ENCODE measurements at regions of chr2 and their contacts with region 1.

Region 1: DNA sequence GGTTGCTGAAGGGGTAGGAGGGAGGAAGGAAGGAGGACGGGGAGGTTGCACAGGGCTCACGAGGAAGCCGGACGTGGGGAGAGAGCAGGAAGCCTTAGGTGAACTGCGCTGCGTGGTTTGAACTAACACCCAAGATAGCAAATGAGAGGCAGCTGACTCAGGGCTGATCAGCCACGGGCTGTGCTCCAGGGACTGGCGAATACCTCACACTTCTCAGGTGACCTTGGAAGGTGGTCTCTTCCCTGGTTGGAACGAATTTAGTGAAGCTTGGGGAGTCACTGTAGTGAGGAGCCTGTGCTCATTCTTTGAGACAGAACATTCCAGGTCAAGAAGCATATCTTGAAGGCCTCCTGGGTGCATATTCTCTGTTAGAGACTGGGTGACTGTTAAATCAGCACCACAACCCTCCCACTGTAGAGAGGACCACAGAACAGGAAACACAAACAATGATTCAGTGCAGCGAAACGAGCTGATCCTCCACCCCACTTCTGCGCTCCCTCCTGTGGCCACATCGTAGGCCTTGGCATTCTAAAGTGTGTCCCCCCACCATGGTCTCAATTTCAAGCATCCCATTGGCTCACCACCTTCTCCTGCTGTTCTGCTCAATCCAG is 33.8 kb downstream of the TOGARAM2 start:
- DNase-seq: peak; percentile 87
- H3K4me3 Mint-ChIP-seq: peak overlapping the region; percentile 79
- H3K27ac Mint-ChIP-seq: peak overlapping the region; percentile 95
- H3K4me1 Mint-ChIP-seq: peaks cover 89% of the 10 kb centered on the region
- H3K27me3 Mint-ChIP-seq: no peaks in the 10 kb centered on the region

Region 2: GRCh38 chr2:28821295-28821958 is 193.5 kb before region 1 on chr2:
- CTCF ChIA-PET with region 1: interaction called, 4 read pairs
- POLR2A ChIA-PET with region 1: no interaction called
- intact Hi-C with region 1: loop called (anchors 5 kb)
- DNase-seq: peak; percentile 62
- H3K4me3 Mint-ChIP-seq: no peak overlapping the region
- H3K27ac Mint-ChIP-seq: no peak overlapping the region
- H3K4me1 Mint-ChIP-seq: peaks cover 6% of the 10 kb centered on the region
- H3K27me3 Mint-ChIP-seq: no peaks in the 10 kb centered on the region

Region 3: DNA sequence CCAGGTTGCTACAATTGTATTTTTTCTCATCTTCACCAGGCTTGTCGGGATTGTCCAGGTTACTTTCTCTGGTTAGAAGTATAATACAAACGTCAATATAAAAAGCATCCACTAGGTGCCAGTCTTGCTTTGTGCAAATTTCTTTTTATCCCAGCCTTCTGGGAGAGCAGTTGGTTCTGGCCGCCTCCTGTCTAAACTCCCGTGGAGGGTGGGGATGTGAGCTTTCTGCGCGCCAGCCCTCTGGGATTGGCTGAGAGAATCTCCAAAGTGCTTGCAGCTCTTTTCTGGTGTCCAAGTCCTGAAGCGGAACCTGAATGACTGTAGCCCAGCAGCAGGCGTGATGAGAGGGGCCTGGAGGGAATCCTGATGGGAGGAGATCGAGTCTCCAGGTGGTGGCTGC is 56.2 kb before region 1 on chr2:
- CTCF ChIA-PET with region 1: interaction called, 14 read pairs
- POLR2A ChIA-PET with region 1: interaction called, 4 read pairs
- intact Hi-C with region 1: loop called (anchors 1 kb)
- DNase-seq: peak; percentile 40
- H3K4me3 Mint-ChIP-seq: no peak overlapping the region
- H3K27ac Mint-ChIP-seq: no peak overlapping the region
- H3K4me1 Mint-ChIP-seq: peaks cover 3% of the 10 kb centered on the region
- H3K27me3 Mint-ChIP-seq: no peaks in the 10 kb centered on the region

Region 4: DNA sequence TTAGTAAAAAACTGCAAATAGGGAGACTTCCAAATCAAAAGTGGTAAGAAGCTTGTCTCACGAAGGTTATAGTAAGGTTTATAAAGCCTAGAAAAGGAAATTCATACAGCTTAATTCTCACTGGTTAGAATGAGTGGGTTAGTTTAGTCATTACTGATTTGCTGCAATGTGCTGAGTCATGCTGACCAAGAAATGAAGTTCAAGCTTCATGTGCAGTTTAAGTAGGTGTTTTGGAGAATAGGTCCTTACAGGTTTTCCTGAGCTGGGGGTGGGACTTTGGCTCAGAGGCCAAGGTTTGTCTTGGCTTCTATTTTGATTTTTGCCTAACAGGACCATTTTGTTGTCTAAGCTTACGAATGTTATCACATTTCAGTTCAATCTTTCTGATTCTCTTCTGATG is 115.4 kb after region 1 on chr2:
- CTCF ChIA-PET with region 1: interaction called, 15 read pairs
- POLR2A ChIA-PET with region 1: interaction called, 4 read pairs
- intact Hi-C with region 1: loop called (anchors 5 kb)
- DNase-seq: peak; percentile 67
- H3K4me3 Mint-ChIP-seq: no peak overlapping the region
- H3K27ac Mint-ChIP-seq: peak overlapping the region; percentile 70
- H3K4me1 Mint-ChIP-seq: peaks cover 48% of the 10 kb centered on the region
- H3K27me3 Mint-ChIP-seq: no peaks in the 10 kb centered on the region

Measured in activated CD4-positive, alpha-beta memory T cell treated with anti-CD3 and anti-CD28 coated beads for 36 hours (primary cell).